AG04449 (cell line): ENCODE measurements at regions of chr5 and their contacts with region 1.

Region 1: GRCh38 chr5:61658592-61659008 is 326.5 kb downstream of the ZSWIM6 start:
- DNase-seq: peak; percentile 12
- H3K4me3 ChIP-seq: no peak overlapping the region
- CTCF ChIP-seq: peak; percentile 97

Region 2: DNA sequence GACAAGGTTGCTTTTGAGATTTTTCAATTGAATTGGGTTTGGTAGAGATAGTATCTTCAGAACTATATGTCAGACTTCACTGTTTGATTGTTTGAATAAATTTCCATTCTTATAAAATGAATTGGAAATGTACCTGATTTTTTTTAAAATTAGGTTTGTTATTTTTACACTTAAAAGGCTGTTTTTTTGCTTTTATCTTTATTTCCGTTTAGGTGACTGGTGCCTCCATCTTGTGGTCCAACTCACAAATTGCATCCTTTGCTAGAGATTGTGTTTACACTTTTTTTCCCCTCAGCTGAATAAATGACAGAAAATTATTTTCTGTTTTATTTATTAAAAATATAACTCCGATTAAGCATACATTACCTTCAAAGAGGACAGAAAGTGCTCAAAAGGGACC is 698.0 kb before region 1 on chr5:
- CTCF ChIA-PET with region 1: interaction called, 29 read pairs
- POLR2A ChIA-PET with region 1: no interaction called
- DNase-seq: no peak
- H3K4me3 ChIP-seq: no peak overlapping the region
- CTCF ChIP-seq: peak; percentile 23

Region 3: DNA sequence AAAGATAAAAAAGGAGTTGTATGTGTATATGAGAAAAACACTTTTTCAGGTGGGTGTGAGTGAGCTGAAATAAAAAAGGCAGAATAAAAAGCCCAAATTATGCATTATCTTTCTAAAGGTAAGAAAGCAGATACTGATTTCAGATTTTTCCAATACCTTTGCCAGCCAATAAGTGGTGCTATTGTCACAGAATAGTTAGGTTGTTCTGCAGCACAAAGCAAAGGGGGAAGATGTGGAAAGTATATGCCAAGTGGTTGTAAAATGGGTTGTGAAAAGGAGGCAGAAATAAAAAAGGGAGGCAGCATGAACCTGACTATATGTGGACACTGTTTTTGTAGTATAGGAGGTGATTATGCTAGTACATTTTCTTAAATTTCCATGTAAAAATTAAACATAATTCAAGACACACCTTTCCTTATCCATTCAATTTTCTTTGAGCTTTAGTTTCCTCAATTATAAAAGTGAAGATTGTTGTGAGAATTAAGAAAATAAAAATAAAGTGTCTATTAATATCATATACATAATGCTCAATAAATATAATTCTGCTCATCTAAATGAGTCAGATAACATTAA is 603.1 kb before region 1 on chr5:
- CTCF ChIA-PET with region 1: interaction called, 63 read pairs
- POLR2A ChIA-PET with region 1: no interaction called
- DNase-seq: no peak
- H3K4me3 ChIP-seq: no peak overlapping the region
- CTCF ChIP-seq: peak; percentile 60

Region 4: DNA sequence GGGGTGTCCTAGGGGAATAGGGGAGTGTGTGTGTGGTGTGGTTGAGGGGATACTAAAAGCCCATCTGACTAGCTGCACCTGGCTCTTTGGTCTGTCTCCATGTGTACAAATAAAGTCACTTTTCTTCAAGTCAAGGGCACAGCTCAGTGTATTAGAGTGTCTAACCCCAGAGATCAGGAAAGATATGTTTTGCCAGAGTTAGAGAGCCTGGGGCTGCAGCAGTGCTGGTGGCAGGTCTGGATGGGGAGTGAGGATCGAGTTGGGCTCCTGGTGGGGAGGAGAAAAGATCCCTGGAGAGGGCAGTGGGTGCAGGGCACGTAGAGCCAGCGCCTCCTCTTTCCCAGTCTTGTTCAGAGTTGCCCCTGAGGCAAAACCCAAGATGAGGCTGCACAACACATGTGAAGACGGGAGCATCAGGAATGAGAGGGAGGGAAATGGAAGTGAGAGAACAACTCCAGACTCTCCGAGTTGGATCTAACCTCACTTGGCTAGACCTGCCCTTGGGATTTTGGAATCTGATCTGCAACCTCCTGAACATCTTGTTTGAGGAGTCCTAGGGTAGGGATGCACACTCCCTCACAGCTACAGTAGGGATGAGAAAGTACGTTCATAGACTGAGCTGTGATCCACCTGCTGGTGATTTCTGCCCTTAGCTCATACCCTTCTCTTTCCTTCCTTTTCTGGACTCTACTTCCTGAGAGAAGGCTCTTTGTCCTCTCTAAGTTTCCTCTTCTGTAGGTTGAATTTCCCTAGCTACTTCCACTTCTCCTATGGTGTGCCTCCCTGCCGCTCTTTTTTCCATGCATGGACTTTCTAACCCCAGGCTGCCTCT is 16.6 kb before region 1 on chr5:
- CTCF ChIA-PET with region 1: interaction called, 39 read pairs
- POLR2A ChIA-PET with region 1: no interaction called
- DNase-seq: no peak
- H3K4me3 ChIP-seq: no peak overlapping the region
- CTCF ChIP-seq: peak; percentile 38

Region 5: DNA sequence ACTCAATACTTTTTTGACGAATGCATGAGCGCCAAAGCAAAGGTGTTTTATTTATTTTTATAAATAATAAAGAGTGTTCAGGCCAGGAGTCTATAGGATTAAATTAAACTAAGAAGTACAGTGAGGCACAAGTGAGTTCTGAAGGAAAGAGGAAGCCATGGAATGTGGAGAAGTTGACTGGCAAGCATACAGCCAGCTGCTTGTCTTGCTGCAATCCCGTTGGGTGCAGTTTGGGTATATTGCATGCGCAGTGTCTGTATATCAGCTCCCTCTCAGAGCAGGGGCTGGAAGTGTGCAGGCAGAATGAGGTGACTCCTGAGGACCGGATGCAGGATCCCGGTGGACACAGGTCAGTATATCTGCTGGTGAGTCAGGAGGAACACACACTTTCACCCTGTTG is 10.9 kb before region 1 on chr5:
- CTCF ChIA-PET with region 1: interaction called, 39 read pairs
- POLR2A ChIA-PET with region 1: no interaction called
- DNase-seq: no peak
- H3K4me3 ChIP-seq: no peak overlapping the region
- CTCF ChIP-seq: no peak